ENCODE measurements at regions of chr2 and their contacts with region 1.

Region 1: DNA sequence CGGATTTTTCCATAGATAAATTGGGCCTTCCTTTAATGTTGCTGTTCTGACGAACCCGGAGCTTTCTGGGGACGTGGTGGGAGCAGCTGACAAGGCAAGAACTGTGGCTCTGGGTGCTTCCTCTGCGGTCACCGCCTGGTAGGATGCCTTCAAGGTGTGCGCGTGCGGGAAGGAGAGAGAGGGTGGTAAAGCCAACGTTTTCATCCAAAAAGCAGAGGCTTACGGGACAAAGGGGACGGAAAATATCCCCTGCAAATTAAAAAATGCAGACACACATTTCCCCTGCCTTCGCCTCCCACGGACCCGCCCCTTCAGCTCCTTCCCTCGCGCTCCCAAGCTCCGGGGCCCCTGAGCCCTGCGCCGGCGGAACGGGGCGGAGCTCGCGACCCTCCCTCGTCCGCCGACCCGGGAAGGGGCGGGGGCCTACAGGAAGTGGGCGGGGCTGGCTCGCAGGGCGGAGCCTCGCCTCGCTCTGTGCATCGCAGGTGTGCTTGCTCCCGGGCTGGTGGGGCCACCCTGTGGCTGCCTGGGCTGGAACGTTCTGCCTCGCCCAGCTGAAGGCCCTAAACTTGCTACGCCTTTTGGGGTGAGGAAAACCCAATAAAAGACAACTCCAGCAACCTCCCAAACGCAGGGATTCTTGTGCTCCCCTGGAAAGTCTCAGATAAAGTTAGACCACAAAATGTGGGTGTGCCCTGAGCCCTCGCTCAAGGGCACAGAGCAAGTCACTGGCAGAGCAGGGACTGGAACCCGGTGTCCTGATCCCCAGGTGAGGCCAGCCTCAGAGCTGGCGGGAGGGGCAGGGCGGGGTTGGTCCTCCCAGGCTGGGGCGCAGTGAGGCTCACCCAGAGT is 25.4 kb upstream of the SLC66A3 start:
- DNase-seq: peak; percentile 65
- ATAC-seq: peak; percentile 90
- H3K4me3 ChIP-seq: peak overlapping the region; percentile 33 to 54
- H3K27ac ChIP-seq: peak overlapping the region; percentile 39
- H3K4me1 ChIP-seq: peaks cover 9 to 41% of the 10 kb centered on the region in 2 experiments
- H3K27me3 ChIP-seq: no peaks in the 10 kb centered on the region
- CTCF ChIP-seq: peak in 2 of 3 experiments; percentile 63 to 66; a peak in 4 of 6 replicates
- POLR2A ChIP-seq: no peak
- RAD21 ChIP-seq: no peak

Region 2: GRCh38 chr2:11154923-11155380 is 25.1 kb after region 1 on chr2:
- CTCF ChIA-PET with region 1: interaction called, 3 read pairs
- POLR2A ChIA-PET with region 1: interaction called, 9 read pairs
- RAD21 ChIA-PET with region 1: interaction called, 5 to 11 read pairs
- intact Hi-C with region 1: no loop called
- DNase-seq: peak; percentile 89
- ATAC-seq: peak; percentile 90
- H3K4me3 ChIP-seq: peak overlapping the region; percentile 58 to 77
- H3K27ac ChIP-seq: peak overlapping the region; percentile 93
- H3K4me1 ChIP-seq: peaks cover 7 to 18% of the 10 kb centered on the region in 2 experiments; a peak in 3 of 4 replicates
- H3K27me3 ChIP-seq: no peaks in the 10 kb centered on the region
- CTCF ChIP-seq: no peak
- POLR2A ChIP-seq: no peak
- RAD21 ChIP-seq: no peak

Region 3: DNA sequence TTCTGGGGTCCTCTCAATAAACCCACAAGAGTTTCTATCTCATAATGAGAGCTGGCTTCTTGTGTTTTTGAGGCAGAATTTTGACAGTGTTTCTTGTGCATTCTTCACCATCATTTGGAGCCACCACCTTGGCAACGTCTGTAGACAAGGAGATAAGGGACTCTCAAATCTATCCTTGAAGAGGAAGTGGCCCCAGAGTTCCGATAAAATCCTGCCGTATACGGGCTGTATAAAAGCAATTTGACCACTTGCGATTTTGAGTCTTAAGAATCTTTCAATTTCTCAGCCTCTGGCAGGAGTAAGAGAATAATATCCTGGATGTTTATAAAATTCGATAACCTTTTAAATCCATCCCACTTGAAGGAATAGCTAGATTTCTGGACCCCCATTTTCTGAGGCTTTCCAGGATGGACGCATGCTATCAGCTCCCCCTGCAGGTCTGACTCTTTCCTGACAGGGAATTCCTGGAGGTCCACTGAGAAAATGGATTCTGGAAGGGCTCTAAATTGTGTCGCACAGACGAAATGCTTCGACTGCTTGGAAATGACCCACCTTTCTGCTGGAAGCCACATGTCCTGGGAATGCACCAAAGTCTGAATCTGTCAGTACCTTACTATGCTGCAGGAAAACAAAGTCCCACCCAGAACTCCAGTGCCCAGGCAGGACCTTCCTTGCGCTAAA is 282.1 kb after region 1 on chr2:
- CTCF ChIA-PET with region 1: interaction called, 51 read pairs
- POLR2A ChIA-PET with region 1: interaction called, 5 read pairs
- RAD21 ChIA-PET with region 1: interaction called, 4 to 11 read pairs
- intact Hi-C with region 1: loop called (anchors 1 kb)
- DNase-seq: no peak
- ATAC-seq: peak; percentile 75
- H3K4me3 ChIP-seq: 0 out of 4 replicates have a peak overlapping the region, but pooled peaks of 1 of the 2 experiments have one; percentile 1
- H3K27ac ChIP-seq: no peak overlapping the region
- H3K4me1 ChIP-seq: peaks cover 0 to 14% of the 10 kb centered on the region in 2 experiments; a peak in 1 of 4 replicates
- H3K27me3 ChIP-seq: no peaks in the 10 kb centered on the region
- CTCF ChIP-seq: peak; percentile 82 to 87 (median 83)
- POLR2A ChIP-seq: no peak
- RAD21 ChIP-seq: peak; percentile 95

Region 4: GRCh38 chr2:11465497-11466406 is 335.9 kb after region 1 on chr2 and contains the start of gene E2F6:
- CTCF ChIA-PET with region 1: interaction called, 6 read pairs
- POLR2A ChIA-PET with region 1: no interaction called
- RAD21 ChIA-PET with region 1: no interaction called
- intact Hi-C with region 1: loop called (anchors 5 kb)
- DNase-seq: peak; percentile 88
- ATAC-seq: peak; percentile 86
- H3K4me3 ChIP-seq: peak within 1 kb of the TSS; percentile 65 to 72
- H3K27ac ChIP-seq: peak within 1 kb of the TSS; percentile 79
- H3K4me1 ChIP-seq: peaks cover 0 to 20% of the 10 kb centered on the region in 2 experiments; a peak in 3 of 4 replicates
- H3K27me3 ChIP-seq: no peaks in the 10 kb centered on the region
- CTCF ChIP-seq: no peak
- POLR2A ChIP-seq: no peak
- RAD21 ChIP-seq: no peak
- total RNA-seq, gene E2F6: 22.8 TPM

Region 5: DNA sequence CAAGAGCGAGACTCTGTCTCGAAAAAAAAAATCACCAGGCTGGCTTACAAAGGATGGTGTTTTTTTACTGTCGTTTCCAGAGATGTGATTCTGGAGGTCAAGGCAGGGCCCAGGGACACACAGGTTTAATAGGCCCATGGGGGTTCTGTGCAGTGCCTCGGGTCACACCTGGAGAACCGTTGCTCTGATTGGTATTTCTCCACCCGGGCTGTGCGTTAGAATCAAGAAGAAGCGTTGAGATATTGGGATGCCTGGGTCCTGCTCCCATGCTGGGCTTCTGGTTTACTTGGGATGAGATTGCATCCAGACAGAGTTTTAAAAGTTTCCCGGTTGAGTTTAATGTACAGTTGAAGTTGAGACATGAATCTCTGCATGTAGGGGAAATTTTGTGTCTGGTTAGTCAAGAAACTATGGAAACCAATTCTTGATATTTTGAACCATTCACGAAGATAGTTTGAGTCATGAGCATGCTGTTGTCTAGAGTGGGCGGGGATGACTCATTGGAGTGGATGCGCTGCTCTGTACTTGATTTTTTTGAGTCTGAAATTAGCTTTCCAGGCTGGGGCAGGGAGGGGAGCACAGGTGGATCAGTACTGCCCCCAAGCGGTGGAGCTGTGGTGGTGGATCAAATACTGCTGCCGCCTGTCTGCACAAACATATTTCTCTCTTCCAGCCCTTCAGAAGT is 454.2 kb after region 1 on chr2:
- CTCF ChIA-PET with region 1: interaction called, 102 read pairs
- POLR2A ChIA-PET with region 1: interaction called, 3 read pairs
- RAD21 ChIA-PET with region 1: interaction called, 14 to 17 read pairs
- intact Hi-C with region 1: loop called (anchors 1 kb)
- DNase-seq: peak; percentile 69
- ATAC-seq: peak; percentile 81
- H3K4me3 ChIP-seq: no peak overlapping the region
- H3K27ac ChIP-seq: no peak overlapping the region
- H3K4me1 ChIP-seq: peaks cover 4 to 21% of the 10 kb centered on the region in 2 experiments
- H3K27me3 ChIP-seq: no peaks in the 10 kb centered on the region
- CTCF ChIP-seq: peak; percentile 93 to 96 (median 94)
- POLR2A ChIP-seq: no peak
- RAD21 ChIP-seq: peak; percentile 96

Region 6: DNA sequence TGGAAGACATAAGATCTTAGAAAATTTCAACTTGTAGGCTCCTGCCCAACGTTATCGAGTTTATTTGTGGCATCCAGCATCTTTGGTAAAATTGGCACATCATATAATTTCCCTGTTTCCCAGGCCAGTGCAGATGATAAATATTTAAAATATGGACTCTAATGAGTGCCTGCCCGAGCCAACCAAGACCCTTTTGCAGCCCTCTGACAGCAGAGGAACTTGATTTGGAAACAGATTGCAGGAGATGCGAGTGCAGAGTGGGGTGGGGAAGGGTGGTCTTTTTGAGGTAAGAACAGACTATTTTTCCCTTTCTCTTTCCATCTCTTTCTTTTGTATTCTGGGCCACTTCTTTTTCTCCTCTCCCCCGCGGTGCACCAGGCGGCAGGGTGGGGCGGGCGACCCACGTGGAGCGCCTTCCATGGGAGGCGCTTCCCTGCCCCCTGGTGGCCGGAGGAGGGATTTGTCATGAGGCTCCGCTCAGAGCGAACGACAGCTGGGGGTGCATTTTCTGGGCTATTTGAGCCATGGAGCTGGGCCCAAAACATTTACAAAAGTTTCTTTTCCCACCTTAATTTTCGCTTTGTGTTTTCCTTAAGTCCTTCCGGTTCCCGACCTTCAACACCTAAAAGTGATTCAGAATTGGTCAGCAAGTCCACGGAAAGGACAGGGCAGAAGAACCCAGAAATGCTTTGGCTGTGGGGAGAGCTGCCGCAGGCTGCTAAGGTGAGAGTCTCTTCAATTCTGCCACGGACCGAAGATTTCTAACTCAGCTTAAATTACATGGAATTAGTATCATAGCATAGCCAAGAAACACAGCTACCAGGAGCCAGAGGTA is 649.3 kb after region 1 on chr2:
- CTCF ChIA-PET with region 1: interaction called, 3 read pairs
- POLR2A ChIA-PET with region 1: no interaction called
- RAD21 ChIA-PET with region 1: interaction called in 1 of 2 experiments, 4 read pairs
- intact Hi-C with region 1: loop called (anchors 2 kb)
- DNase-seq: peak; percentile 34
- ATAC-seq: peak; percentile 100
- H3K4me3 ChIP-seq: 0 out of 4 replicates have a peak overlapping the region, but pooled peaks of 1 of the 2 experiments have one; percentile 28
- H3K27ac ChIP-seq: no peak overlapping the region
- H3K4me1 ChIP-seq: peaks cover 0 to 11% of the 10 kb centered on the region in 2 experiments; a peak in 3 of 4 replicates
- H3K27me3 ChIP-seq: no peaks in the 10 kb centered on the region
- CTCF ChIP-seq: peak; percentile 87 to 96 (median 96)
- POLR2A ChIP-seq: no peak
- RAD21 ChIP-seq: peak; percentile 98